Caco-2 (cell line): ENCODE measurements at regions of chr13 and their contacts with region 1.

Region 1: DNA sequence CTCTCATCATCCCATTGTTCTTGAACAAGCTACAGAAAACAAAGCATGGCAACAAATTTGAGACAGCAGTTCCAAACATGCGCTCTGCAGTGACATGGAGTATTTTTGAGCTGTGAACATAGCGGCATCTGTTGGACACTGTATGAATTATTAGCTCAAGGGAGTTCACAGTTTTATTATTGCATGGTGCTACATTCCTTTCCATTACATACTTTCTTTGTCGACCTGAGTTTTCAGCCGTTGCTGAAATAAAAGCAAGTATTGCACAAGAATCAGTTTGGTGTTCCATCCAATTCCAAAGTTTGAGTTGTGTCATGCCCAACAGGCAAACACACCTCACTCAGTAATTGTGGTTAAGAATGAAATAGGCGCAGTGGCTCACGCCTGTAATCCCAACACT is 30.1 kb upstream of the METTL21C start:
- DNase-seq: peak in 1 of 2 experiments; percentile 68
- H3K4me3 ChIP-seq: no peak overlapping the region
- H3K4me3 Mint-ChIP-seq: no peak overlapping the region
- H3K27ac Mint-ChIP-seq: peak overlapping the region; percentile 80
- H3K4me1 ChIP-seq: no peaks in the 10 kb centered on the region
- H3K4me1 Mint-ChIP-seq: peaks cover 14% of the 10 kb centered on the region
- H3K27me3 ChIP-seq: no peaks in the 10 kb centered on the region
- H3K27me3 Mint-ChIP-seq: peaks cover 6% of the 10 kb centered on the region
- CTCF ChIP-seq: peak; percentile 55 to 63

Region 2: DNA sequence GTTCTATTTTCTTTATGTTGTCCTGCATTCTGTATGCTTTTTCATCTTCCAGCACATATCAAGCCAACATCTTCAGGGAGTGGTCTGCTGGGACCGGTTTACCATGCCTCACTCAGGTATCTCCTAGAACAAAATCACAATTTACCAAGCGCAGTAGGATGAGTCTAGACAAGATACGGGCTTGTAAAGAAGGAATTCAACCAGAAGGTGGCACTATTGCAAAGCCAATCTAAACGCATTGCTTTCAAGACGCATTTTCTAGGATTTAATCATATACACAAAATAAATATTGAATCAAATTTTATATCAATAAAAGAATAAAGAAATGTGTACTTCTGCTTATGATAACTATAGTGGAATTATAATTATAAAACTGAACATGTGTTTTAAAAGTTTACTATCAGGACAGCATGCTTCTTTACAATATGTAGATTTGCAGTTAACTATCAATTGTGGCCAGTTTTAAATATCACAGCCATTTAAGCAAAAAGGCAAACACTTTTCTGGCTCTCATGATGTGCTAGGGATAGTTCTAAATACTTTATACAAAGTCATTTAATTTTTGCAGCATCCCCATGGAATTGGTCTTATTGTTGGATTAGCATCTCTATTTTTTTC is 144.3 kb before region 1 on chr13:
- CTCF ChIA-PET with region 1: interaction called, 14 read pairs
- POLR2A ChIA-PET with region 1: no interaction called
- intact Hi-C with region 1: loop called (anchors 1 kb)
- DNase-seq: peak in 1 of 2 experiments; percentile 54
- H3K4me3 ChIP-seq: no peak overlapping the region
- H3K4me3 Mint-ChIP-seq: no peak overlapping the region
- H3K27ac Mint-ChIP-seq: no peak overlapping the region
- H3K4me1 ChIP-seq: no peaks in the 10 kb centered on the region
- H3K4me1 Mint-ChIP-seq: no peaks in the 10 kb centered on the region
- H3K27me3 ChIP-seq: no peaks in the 10 kb centered on the region
- H3K27me3 Mint-ChIP-seq: peaks cover 6% of the 10 kb centered on the region
- CTCF ChIP-seq: peak; percentile 66 to 75

Region 3: DNA sequence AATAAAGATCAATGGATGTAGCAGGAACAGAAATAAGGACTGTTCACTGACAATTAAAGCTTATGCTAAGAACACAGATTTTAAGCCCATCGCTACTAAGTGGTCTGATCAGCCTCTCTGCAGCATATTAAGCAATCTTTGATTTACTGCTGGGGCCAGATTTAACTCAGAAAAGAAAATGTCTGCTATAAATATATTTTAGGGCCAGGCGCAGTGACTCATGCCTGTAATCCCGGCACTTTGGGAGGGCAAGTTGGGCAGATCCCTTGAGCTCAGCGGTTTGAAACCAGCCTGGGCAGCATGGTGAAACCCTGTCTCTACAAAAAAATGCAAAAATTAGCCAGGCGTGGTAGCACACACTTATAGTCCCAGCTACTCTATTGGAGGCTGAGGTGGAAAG is 73.0 kb before region 1 on chr13:
- CTCF ChIA-PET with region 1: interaction called, 12 read pairs
- POLR2A ChIA-PET with region 1: no interaction called
- intact Hi-C with region 1: loop called (anchors 2 kb)
- DNase-seq: no peak
- H3K4me3 ChIP-seq: no peak overlapping the region
- H3K4me3 Mint-ChIP-seq: no peak overlapping the region
- H3K27ac Mint-ChIP-seq: peak overlapping the region; percentile 57
- H3K4me1 ChIP-seq: peaks cover 32% of the 10 kb centered on the region
- H3K4me1 Mint-ChIP-seq: peaks cover 7% of the 10 kb centered on the region
- H3K27me3 ChIP-seq: no peaks in the 10 kb centered on the region
- H3K27me3 Mint-ChIP-seq: no peaks in the 10 kb centered on the region
- CTCF ChIP-seq: no peak

Region 4: DNA sequence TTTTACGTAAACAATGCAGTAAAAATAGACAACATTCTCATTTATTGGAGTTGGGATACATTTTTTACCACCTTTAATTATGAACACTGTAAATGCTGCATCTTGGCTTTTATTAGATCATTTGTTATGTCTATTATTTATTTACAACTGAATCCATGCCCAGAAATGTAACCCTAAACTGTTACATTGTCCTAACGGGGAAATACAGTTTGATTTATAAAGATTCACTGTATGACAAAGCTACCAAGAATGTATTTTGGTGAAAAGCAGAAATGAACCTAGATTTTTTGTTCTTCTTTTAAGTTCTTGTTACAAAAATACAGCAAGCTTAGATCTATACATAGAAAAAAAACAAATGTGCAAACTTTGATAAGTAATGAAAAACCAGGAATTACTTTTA is 31.1 kb before region 1 on chr13:
- CTCF ChIA-PET with region 1: no interaction called
- POLR2A ChIA-PET with region 1: no interaction called
- intact Hi-C with region 1: loop called (anchors 2 kb)
- DNase-seq: no peak
- H3K4me3 ChIP-seq: no peak overlapping the region
- H3K4me3 Mint-ChIP-seq: no peak overlapping the region
- H3K27ac Mint-ChIP-seq: no peak overlapping the region
- H3K4me1 ChIP-seq: peaks cover 7% of the 10 kb centered on the region; the same call in 1 of the 2 replicates
- H3K4me1 Mint-ChIP-seq: peaks cover 7% of the 10 kb centered on the region
- H3K27me3 ChIP-seq: no peaks in the 10 kb centered on the region
- H3K27me3 Mint-ChIP-seq: no peaks in the 10 kb centered on the region
- CTCF ChIP-seq: no peak

Region 5: DNA sequence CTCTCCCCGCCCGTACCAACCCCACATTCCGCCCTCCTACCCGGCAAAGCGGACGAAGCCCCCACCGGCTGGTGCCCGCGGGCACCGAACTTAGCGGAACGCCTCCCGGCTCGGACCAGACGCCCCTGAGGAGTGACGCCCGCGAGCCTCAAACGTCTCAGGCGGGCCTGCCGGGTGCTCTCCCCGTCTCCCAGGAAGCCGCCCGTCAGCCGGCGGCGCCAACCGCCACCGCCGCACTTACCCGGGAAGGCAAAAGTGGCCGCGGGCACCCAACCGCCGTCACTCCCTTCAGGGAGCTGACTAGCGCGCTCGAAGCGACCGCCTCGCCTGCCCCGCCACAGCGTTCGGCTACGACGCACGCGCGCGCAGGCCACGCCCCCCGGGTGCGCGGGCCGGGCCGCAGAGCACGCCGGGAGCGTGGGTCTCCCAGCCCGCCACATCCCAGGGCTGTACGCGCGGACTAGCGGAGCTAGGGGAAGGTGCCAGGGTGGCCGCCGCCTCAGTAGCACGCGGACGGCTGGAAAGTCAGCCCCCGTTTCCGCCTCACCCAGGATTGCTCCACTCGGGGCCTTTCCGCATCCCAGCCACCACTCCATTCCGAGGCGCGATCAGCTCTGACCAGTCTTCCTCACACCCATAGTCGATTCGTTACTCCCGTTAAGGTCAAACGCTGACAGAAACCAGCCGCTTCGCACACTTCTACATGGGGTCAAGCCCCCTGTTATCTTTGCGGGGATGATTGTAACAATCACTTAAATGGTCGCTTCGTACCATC is 48.7 kb after region 1 on chr13 and contains the start of gene TEX30:
- CTCF ChIA-PET with region 1: interaction called, 4 read pairs
- POLR2A ChIA-PET with region 1: no interaction called
- intact Hi-C with region 1: loop called (anchors 1 kb)
- DNase-seq: peak; percentile 87 to 94
- H3K4me3 ChIP-seq: peak within 1 kb of the TSS; percentile 96
- H3K4me3 Mint-ChIP-seq: peak within 1 kb of the TSS; percentile 92
- H3K27ac Mint-ChIP-seq: peak within 1 kb of the TSS; percentile 94
- H3K4me1 ChIP-seq: peaks cover 24% of the 10 kb centered on the region
- H3K4me1 Mint-ChIP-seq: peaks cover 31% of the 10 kb centered on the region
- H3K27me3 ChIP-seq: no peaks in the 10 kb centered on the region
- H3K27me3 Mint-ChIP-seq: no peaks in the 10 kb centered on the region
- CTCF ChIP-seq: no peak
- total RNA-seq, gene TEX30: 27.5 and 30.4 TPM in 2 replicates

Region 6: GRCh38 chr13:102812611-102813287 is 87.8 kb after region 1 on chr13:
- CTCF ChIA-PET with region 1: no interaction called
- POLR2A ChIA-PET with region 1: no interaction called
- intact Hi-C with region 1: no loop called
- DNase-seq: no peak
- H3K4me3 ChIP-seq: no peak overlapping the region
- H3K4me3 Mint-ChIP-seq: no peak overlapping the region
- H3K27ac Mint-ChIP-seq: no peak overlapping the region
- H3K4me1 ChIP-seq: peaks cover 7% of the 10 kb centered on the region
- H3K4me1 Mint-ChIP-seq: peaks cover 8% of the 10 kb centered on the region
- H3K27me3 ChIP-seq: no peaks in the 10 kb centered on the region
- H3K27me3 Mint-ChIP-seq: no peaks in the 10 kb centered on the region
- CTCF ChIP-seq: no peak

Region 7: DNA sequence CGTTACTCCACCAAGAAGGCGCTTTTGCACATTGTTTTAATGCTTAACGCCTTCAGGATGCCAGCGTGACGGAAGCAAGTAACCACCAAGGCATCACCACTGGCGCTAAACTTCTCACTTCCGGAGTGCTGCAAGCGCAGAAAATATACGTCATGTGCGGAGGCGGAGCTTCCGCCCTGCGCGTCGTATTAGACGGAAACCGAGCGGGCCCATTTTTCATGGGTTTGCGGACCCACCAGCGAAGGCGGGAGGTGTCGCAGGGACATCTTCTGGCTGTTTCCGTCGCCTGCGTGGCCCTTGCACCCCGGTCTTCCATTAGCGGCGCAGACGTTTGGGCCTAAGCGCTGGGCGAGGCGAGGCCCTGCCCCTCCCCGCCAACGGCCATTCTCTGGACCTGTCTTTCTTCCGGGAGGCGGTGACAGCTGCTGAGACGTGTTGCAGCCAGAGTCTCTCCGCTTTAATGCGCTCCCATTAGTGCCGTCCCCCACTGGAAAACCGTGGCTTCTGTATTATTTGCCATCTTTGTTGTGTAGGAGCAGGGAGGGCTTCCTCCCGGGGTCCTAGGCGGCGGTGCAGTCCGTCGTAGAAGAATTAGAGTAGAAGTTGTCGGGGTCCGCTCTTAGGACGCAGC is 120.8 kb after region 1 on chr13 and contains the start of gene ERCC5:
- CTCF ChIA-PET with region 1: interaction called, 13 read pairs
- POLR2A ChIA-PET with region 1: interaction called, 3 read pairs
- intact Hi-C with region 1: loop called (anchors 1 kb)
- DNase-seq: peak; percentile 95 to 97
- H3K4me3 ChIP-seq: peak within 1 kb of the TSS; percentile 70
- H3K4me3 Mint-ChIP-seq: peak within 1 kb of the TSS; percentile 77
- H3K27ac Mint-ChIP-seq: peak within 1 kb of the TSS; percentile 92
- H3K4me1 ChIP-seq: no peaks in the 10 kb centered on the region
- H3K4me1 Mint-ChIP-seq: no peaks in the 10 kb centered on the region
- H3K27me3 ChIP-seq: no peaks in the 10 kb centered on the region
- H3K27me3 Mint-ChIP-seq: no peaks in the 10 kb centered on the region
- CTCF ChIP-seq: peak in 1 of 2 experiments; percentile 15
- total RNA-seq, gene ERCC5: 29.9 and 31.4 TPM in 2 replicates